Activated CD8-positive, alpha-beta T cell treated with anti-CD3 and anti-CD28 coated beads for 36 hours (primary cell): ENCODE measurements at regions of chr19 and their contacts with region 1.

Region 1: DNA sequence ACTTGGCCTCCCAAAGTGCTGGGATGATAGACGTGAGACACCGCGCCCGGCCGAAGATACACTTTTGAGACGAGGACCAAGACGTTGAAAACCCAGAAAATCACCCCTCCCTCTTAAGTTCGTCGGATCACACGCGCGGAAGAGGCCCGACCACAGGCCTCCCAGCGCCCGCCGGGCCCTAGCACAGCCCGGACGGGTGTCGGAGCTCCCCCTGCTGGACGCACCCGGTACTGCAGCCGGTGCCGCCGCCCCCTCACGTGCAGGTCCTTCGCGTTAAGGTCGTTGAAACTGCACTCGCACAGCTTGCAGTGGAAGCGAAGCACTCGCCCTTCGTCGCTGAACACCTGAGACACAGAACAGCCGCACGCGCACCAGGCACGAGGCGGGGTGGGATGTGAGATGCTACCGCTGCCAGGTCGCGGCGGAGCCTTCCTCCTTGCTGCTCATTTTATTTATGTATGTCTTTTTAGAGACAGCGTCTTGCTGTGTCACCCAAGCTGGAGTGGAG is 35.7 kb upstream of the MATK start:
- DNase-seq: peak; percentile 92
- ATAC-seq: peak; percentile 91
- H3K4me3 Mint-ChIP-seq: no peak overlapping the region
- H3K27ac Mint-ChIP-seq: peak overlapping the region; percentile 67
- H3K4me1 Mint-ChIP-seq: peaks cover 19% of the 10 kb centered on the region
- H3K27me3 Mint-ChIP-seq: no peaks in the 10 kb centered on the region
- CTCF ChIP-seq: peak; percentile 100

Region 2: DNA sequence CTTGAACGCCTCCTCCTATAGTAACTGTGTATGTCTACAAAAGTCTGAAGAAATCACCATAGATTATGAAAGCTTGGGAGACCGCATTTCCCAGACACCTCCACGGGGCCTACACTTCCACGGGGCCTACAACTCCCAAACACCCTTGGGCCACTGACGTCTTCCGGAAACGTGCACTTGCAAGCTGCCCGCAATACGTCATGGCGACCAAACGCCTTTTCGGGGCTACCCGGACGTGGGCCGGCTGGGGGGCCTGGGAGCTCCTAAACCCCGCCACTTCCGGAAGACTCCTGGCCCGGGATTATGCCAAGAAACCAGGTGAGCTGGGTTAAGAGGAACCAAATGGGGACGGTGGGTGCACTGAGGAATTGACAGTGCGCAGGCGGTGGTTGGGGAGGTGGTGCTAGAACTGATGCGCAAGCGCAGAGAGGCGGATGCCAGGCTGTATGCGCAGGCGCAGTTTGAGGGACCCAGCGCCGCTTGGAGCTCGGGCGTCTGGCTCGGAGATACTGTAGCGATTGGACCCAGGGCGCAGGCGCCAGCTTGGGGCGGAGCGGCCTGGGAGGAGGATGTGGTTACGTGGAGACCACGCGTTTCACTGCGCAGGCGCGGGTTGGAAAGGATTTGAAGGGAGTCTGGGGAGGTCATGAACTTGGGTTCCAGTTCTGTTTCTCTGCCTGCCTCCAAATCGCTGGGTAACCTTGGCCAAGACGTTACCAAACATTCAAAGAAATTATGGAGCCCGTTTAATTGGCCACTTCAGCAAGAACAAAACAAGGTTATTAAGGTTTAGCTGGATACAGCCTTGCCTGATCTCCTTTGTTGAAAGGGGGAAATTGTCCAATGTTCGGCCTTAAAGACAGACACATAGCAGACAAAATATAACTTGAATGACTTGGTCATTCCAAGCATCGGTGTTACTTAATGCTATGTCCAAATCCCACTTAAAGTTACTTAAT is 59.1 kb before region 1 on chr19 and contains the start of gene MRPL54:
- CTCF ChIA-PET with region 1: interaction called, 39 read pairs
- POLR2A ChIA-PET with region 1: interaction called, 5 read pairs
- intact Hi-C with region 1: loop called (anchors 10 kb)
- DNase-seq: peak; percentile 99
- ATAC-seq: peak; percentile 87
- H3K4me3 Mint-ChIP-seq: peak within 1 kb of the TSS; percentile 99
- H3K27ac Mint-ChIP-seq: peak within 1 kb of the TSS; percentile 99
- H3K4me1 Mint-ChIP-seq: peaks cover 39% of the 10 kb centered on the region
- H3K27me3 Mint-ChIP-seq: no peaks in the 10 kb centered on the region
- CTCF ChIP-seq: no peak
- total RNA-seq, gene MRPL54: 47.4 to 50.9 TPM

Region 3: GRCh38 chr19:3783660-3784584 is 38.0 kb before region 1 on chr19:
- CTCF ChIA-PET with region 1: interaction called, 13 read pairs
- POLR2A ChIA-PET with region 1: interaction called, 3 read pairs
- intact Hi-C with region 1: loop called (anchors 5 kb)
- DNase-seq: peak; percentile 71
- ATAC-seq: peak; percentile 66
- H3K4me3 Mint-ChIP-seq: peak overlapping the region; percentile 84
- H3K27ac Mint-ChIP-seq: peak overlapping the region; percentile 55
- H3K4me1 Mint-ChIP-seq: peaks cover 8% of the 10 kb centered on the region
- H3K27me3 Mint-ChIP-seq: no peaks in the 10 kb centered on the region
- CTCF ChIP-seq: peak; percentile 68

Region 4: GRCh38 chr19:3788996-3789778 is 32.7 kb before region 1 on chr19:
- CTCF ChIA-PET with region 1: interaction called, 13 read pairs
- POLR2A ChIA-PET with region 1: interaction called, 3 read pairs
- intact Hi-C with region 1: loop called (anchors 5 kb)
- DNase-seq: peak; percentile 51
- ATAC-seq: peak; percentile 40
- H3K4me3 Mint-ChIP-seq: no peak overlapping the region
- H3K27ac Mint-ChIP-seq: peak overlapping the region; percentile 44
- H3K4me1 Mint-ChIP-seq: peaks cover 11% of the 10 kb centered on the region
- H3K27me3 Mint-ChIP-seq: no peaks in the 10 kb centered on the region
- CTCF ChIP-seq: no peak

Region 5: DNA sequence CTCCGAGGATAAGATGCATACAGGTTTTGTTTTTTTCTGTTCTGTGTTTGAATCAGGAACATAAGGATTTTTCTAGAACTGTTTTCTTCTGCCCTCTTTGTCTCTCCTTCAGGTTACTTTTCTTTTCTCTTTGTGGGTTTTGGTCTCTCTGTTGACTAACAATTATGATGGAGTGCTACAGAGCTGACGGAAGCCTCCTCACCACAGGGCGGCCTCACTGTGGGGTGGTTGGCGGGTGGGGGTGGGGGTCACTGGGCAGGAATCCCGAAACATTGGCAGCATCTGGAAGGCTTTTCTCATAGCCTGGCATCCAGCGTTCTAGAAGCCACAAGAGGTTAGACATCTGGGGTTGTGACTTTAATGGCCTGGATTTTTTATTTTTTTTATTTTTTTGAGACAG is 23.8 kb before region 1 on chr19:
- CTCF ChIA-PET with region 1: interaction called, 17 read pairs
- POLR2A ChIA-PET with region 1: no interaction called
- intact Hi-C with region 1: no loop called
- DNase-seq: peak; percentile 50
- ATAC-seq: peak; percentile 74
- H3K4me3 Mint-ChIP-seq: no peak overlapping the region
- H3K27ac Mint-ChIP-seq: peak overlapping the region; percentile 52
- H3K4me1 Mint-ChIP-seq: peaks cover 21% of the 10 kb centered on the region
- H3K27me3 Mint-ChIP-seq: no peaks in the 10 kb centered on the region
- CTCF ChIP-seq: no peak

Region 6: DNA sequence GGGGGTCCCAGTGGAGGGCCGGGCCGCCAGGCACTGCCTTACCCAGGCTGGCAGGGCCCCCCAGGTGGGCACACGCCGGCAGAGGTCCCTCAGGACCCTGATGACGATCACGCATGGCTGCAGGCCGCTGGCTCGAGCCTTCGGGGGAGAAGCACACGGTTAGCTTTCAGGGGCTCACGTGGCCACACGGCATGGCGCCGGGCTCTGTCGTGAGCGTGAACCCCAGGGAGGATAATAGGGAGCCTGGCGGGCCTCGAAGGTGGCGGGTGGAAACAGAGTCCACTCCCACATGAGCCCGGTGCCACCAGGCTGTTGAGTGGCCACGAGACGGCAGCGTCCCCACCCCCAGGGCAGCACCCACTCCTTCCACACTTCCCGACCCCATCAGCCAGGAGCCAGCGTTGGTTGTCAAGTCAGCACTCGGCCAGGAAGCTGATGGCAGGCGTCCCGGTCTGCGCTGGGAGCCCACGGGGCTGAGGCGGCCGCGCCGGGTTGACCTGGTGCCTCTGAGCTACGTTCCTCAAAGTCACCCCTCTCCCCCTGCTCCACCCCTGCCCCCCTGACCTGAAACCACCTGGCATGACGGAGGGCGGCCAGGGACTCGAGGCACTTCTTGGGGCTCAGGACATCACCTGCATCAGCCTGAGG is 11.1 kb before region 1 on chr19:
- CTCF ChIA-PET with region 1: interaction called, 14 read pairs
- POLR2A ChIA-PET with region 1: interaction called, 3 read pairs
- intact Hi-C with region 1: no loop called
- DNase-seq: no peak
- ATAC-seq: no peak
- H3K4me3 Mint-ChIP-seq: no peak overlapping the region
- H3K27ac Mint-ChIP-seq: peak overlapping the region; percentile 52
- H3K4me1 Mint-ChIP-seq: peaks cover 56% of the 10 kb centered on the region
- H3K27me3 Mint-ChIP-seq: no peaks in the 10 kb centered on the region
- CTCF ChIP-seq: no peak

Region 7: DNA sequence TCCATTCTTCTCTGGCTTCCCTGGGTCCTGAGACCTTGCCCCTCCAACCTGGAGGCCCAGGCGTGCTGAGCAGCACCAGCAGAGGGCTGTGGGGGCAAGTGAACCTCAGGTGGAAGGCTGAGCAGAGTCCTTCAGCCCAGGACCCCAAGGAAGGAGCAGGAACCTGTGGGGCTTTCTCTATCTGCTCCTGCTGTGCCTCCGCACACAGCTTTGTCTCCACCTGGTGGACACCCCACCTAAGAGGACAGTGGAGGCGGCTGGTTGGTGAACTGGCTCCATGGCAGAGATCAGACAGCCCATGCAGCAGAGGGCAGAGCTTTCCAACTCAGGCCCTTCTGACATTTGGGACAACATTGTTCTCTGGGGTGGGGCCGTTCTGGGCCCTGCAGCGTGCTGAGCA is 27.2 kb after region 1 on chr19:
- CTCF ChIA-PET with region 1: interaction called, 19 read pairs
- POLR2A ChIA-PET with region 1: interaction called, 3 read pairs
- intact Hi-C with region 1: no loop called
- DNase-seq: peak; percentile 72
- ATAC-seq: peak; percentile 74
- H3K4me3 Mint-ChIP-seq: no peak overlapping the region
- H3K27ac Mint-ChIP-seq: no peak overlapping the region
- H3K4me1 Mint-ChIP-seq: no peaks in the 10 kb centered on the region
- H3K27me3 Mint-ChIP-seq: no peaks in the 10 kb centered on the region
- CTCF ChIP-seq: peak; percentile 57